Activated CD8-positive, alpha-beta T cell treated with anti-CD3 and anti-CD28 coated beads, Interleukin-2, amount 10 ng/mL, durations not matched to agents 7 days and 5 days (primary cell): ENCODE measurements at regions of chr15 and their contacts with region 1.

Region 1: GRCh38 chr15:64893481-64894394 is 18.0 kb upstream of the ANKDD1A start:
- DNase-seq: peak; percentile 99
- ATAC-seq: peak; percentile 80
- H3K4me3 Mint-ChIP-seq: peak overlapping the region; percentile 82
- H3K27ac Mint-ChIP-seq: peak overlapping the region; percentile 100
- H3K4me1 Mint-ChIP-seq: peaks cover 72% of the 10 kb centered on the region
- H3K27me3 Mint-ChIP-seq: no peaks in the 10 kb centered on the region

Region 2: DNA sequence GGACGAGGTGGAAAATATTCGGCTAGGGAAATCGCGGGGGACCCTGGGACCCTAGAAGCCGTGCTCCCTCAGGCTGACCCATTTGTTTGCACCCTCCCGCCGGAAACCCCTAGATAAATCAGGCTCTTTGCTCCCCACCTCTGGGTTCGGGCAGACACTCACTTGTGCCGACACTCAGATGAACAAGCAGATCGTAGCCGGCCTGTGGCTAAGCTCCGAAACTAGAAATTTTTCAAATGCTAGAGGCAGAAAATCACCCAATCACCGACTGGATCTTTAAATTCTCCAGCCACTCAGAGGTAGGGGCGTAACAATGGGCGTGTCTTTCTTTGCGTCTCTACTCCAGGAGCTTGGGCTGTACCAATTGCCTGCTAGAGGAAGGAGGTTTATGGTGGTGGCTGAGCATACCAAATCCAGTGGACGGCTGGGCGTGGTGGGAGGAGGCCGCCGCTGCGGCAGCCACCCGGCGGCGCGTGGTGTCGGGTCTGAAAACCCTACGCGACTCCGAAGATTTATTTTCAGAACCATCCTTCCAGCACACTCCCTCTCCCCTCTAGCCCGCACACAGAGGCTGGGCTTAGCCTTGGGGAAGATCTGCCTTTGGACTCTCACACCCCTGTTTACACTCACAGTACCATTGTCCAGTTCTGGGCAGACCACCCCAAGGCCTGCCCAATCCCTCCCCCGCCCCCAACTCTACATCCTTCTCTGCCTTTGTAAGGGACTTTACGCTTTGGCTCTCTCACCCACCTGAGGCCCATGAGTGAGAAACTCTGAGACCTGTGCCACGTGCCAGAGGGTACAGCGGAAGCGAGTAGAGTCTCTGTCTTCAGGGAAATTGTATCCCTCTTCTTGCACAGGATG is 68.1 kb before region 1 on chr15 and contains the start of gene PIF1:
- CTCF ChIA-PET with region 1: interaction called, 20 read pairs
- POLR2A ChIA-PET with region 1: interaction called, 16 read pairs
- DNase-seq: peak; percentile 98
- ATAC-seq: peak; percentile 94
- H3K4me3 Mint-ChIP-seq: peak within 1 kb of the TSS; percentile 88
- H3K27ac Mint-ChIP-seq: peak within 1 kb of the TSS; percentile 92
- H3K4me1 Mint-ChIP-seq: peaks cover 40% of the 10 kb centered on the region
- H3K27me3 Mint-ChIP-seq: no peaks in the 10 kb centered on the region
- total RNA-seq, gene PIF1: 69.1 to 71.1 TPM

Region 3: DNA sequence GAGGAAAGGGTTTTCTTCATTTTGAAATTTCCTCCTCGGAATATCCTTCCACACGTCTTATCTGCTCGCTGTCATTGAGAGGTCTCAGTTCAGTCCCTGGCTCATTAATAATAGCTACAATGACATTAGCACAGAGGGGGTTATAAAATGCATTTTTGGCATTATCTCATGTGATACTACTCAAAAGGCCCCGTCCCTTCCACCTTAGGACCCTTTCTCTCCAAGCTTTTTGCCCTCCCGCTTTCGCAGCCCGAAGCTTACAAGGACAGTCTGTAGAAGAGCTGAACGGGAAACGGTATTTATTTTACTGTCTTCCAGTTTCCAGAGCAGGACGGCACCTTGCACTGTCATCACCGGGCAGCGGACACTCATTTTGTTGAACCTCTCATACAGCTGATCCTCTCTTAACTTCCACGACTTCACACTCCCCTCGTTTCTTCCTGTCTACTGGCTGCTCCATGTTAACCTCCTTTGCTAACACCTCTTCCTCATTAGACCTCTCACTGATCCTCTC is 57.7 kb before region 1 on chr15:
- CTCF ChIA-PET with region 1: interaction called, 114 read pairs
- POLR2A ChIA-PET with region 1: interaction called, 48 read pairs
- DNase-seq: no peak
- ATAC-seq: peak; percentile 12
- H3K4me3 Mint-ChIP-seq: peak overlapping the region; percentile 22
- H3K27ac Mint-ChIP-seq: peak overlapping the region; percentile 96
- H3K4me1 Mint-ChIP-seq: peaks cover 53% of the 10 kb centered on the region
- H3K27me3 Mint-ChIP-seq: no peaks in the 10 kb centered on the region

Region 4: DNA sequence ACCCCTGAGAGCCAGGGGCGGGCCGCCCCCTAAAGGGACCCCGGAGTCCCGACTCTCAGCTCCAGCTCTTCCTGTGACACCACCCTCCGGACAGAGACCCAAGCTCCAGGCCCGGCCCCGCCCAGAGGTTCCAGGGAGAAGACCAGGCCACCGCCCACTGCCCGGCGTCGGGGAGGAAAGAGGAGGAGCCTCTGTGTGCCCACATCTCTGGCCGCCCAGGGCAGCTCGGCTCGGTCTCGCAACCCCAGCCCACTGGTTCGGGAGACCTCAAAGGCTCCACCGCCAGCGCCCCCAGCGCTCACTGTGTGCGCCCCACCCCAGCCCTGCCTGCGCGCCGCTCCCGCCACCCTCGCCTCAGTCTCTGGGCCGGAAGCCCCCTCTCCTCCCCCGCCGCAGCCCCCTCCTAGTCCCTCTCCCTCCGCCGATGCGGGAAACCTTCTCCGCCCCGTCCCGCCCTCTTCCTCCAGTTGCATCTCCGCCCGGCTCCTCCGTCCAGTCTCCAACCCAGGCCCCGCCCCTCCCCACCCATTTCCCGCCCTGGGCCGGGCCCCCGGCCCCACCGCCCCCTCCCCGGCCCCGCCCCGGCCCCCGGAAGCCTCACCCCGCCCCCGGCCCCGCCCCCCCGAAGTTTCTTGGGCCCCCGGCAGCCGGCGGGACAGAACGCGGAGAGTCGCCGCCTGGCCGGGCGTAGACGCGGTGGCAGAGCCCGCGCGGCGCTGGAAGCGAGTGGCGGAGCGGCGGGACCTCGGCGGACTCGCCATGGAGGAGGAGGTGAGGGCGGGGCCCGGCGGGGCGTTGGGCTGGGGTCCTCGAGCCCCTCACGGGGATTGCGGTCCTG is 52.3 kb before region 1 on chr15 and contains the start of gene PLEKHO2:
- CTCF ChIA-PET with region 1: interaction called, 114 read pairs
- POLR2A ChIA-PET with region 1: interaction called, 48 read pairs
- DNase-seq: peak; percentile 98
- ATAC-seq: peak; percentile 79
- H3K4me3 Mint-ChIP-seq: peak within 1 kb of the TSS; percentile 90
- H3K27ac Mint-ChIP-seq: peak within 1 kb of the TSS; percentile 90
- H3K4me1 Mint-ChIP-seq: peaks cover 77% of the 10 kb centered on the region
- H3K27me3 Mint-ChIP-seq: no peaks in the 10 kb centered on the region
- total RNA-seq, gene PLEKHO2: 25.8 to 26.4 TPM

Region 5: DNA sequence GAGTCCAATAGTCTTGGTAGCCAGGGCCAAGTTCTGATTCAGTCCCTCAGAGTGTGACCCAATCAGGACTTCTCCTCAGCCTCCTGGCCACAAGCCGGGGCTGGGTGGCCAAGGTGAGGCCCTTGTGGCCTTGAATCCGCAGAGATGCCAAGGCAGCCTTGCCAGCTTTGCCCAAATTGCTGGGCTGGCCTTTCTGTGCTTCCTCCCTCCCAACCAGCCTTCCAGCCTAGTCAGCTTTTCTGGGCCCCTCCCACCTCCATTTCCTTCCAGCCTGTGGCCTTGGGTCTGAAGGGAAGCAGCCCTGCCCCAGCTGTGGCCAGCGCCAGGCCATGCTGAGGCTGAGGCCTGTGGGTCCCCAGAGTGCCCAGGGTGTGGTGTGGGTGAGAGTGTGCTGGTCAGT is 16.3 kb before region 1 on chr15:
- CTCF ChIA-PET with region 1: interaction called, 29 read pairs
- POLR2A ChIA-PET with region 1: interaction called, 55 read pairs
- DNase-seq: peak; percentile 35
- ATAC-seq: peak; percentile 32
- H3K4me3 Mint-ChIP-seq: no peak overlapping the region
- H3K27ac Mint-ChIP-seq: peak overlapping the region; percentile 75
- H3K4me1 Mint-ChIP-seq: peaks cover 31% of the 10 kb centered on the region
- H3K27me3 Mint-ChIP-seq: no peaks in the 10 kb centered on the region

Region 6: DNA sequence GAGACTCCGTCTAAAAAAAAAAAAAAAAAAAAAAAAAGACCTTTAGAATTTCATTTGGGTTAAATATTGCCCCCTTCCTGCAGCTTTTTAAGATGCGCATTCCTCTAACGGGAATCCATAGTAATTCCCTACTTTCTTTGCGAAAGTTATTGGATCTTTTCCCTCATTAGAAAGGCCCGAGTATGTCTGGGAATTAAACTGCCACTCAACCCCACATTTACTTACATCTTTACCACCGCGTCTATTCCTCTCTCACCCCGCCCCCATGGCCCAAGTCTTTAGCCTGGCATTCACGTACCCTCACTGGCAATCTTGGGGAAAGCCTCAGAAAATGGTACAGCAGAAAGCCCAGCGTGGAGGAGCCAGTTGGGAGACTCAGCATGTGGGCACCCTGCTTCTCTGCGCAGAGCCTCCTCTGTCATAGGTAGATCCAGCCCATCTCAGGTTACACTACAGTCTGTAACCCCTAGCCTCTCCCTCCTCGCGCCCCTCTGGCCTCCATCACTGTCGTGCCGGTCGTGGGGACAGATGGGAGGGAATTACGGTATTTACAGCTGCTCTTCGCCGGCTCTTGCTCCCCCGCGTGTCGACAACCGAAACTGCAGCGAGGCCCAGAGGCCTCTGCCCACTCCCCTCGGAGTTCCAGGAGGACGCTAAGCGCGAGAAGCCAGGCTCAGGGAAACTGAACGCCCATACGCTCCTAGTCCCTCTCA is 11.5 kb after region 1 on chr15:
- CTCF ChIA-PET with region 1: interaction called, 24 read pairs
- POLR2A ChIA-PET with region 1: interaction called, 36 read pairs
- DNase-seq: peak; percentile 84
- ATAC-seq: peak; percentile 90
- H3K4me3 Mint-ChIP-seq: peak overlapping the region; percentile 54
- H3K27ac Mint-ChIP-seq: peak overlapping the region; percentile 43
- H3K4me1 Mint-ChIP-seq: peaks cover 40% of the 10 kb centered on the region
- H3K27me3 Mint-ChIP-seq: no peaks in the 10 kb centered on the region

Region 7: GRCh38 chr15:64911311-64912191 is 17.8 kb after region 1 on chr15 and contains the start of gene ANKDD1A:
- CTCF ChIA-PET with region 1: interaction called, 24 read pairs
- POLR2A ChIA-PET with region 1: interaction called, 36 read pairs
- DNase-seq: peak; percentile 70
- ATAC-seq: peak; percentile 92
- H3K4me3 Mint-ChIP-seq: peak within 1 kb of the TSS; percentile 75
- H3K27ac Mint-ChIP-seq: peak within 1 kb of the TSS; percentile 35
- H3K4me1 Mint-ChIP-seq: peaks cover 46% of the 10 kb centered on the region
- H3K27me3 Mint-ChIP-seq: peaks cover 6% of the 10 kb centered on the region
- total RNA-seq, gene ANKDD1A: 9.1 to 9.5 TPM